ENCODE measurements at regions of chr15 and their contacts with region 1.

Region 1: GRCh38 chr15:98311566-98312188 is 336.7 kb upstream of the IGF1R start:
- DNase-seq: peak; percentile 58
- ATAC-seq: no peak
- H3K4me3 ChIP-seq: no peak overlapping the region
- H3K4me3 Mint-ChIP-seq: no peak overlapping the region
- H3K27ac ChIP-seq: no peak overlapping the region
- H3K27ac Mint-ChIP-seq: no peak overlapping the region
- H3K4me1 ChIP-seq: no peaks in the 10 kb centered on the region
- H3K4me1 Mint-ChIP-seq: no peaks in the 10 kb centered on the region
- H3K27me3 ChIP-seq: no peaks in the 10 kb centered on the region
- H3K27me3 Mint-ChIP-seq: peaks cover 3% of the 10 kb centered on the region
- CTCF ChIP-seq: peak; percentile 96

Region 2: DNA sequence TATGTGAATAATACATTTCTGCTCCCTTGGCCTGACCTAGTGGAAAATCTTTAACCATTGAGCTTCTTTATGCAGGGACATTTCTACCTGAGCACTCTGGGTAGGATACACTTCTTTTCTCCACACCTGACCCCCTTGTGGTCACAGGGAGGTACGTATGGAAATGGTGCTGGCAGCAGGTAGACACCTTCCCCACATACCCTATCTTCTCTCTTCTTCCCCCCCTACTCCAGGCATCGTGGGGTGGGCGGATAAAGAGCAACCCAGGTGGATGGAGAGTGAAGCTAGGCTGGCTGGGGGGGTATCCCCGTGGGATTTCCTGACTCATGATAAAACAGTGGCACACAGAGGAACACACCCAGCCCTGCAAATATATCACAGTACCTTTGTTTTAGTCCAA is 39.1 kb before region 1 on chr15:
- CTCF ChIA-PET with region 1: no interaction called
- POLR2A ChIA-PET with region 1: no interaction called
- intact Hi-C with region 1: no loop called
- DNase-seq: no peak
- ATAC-seq: no peak
- H3K4me3 ChIP-seq: no peak overlapping the region
- H3K4me3 Mint-ChIP-seq: no peak overlapping the region
- H3K27ac ChIP-seq: no peak overlapping the region
- H3K27ac Mint-ChIP-seq: no peak overlapping the region
- H3K4me1 ChIP-seq: no peaks in the 10 kb centered on the region
- H3K4me1 Mint-ChIP-seq: no peaks in the 10 kb centered on the region
- H3K27me3 ChIP-seq: peaks cover 0 to 5% (median 0%) of the 10 kb centered on the region in 4 experiments
- H3K27me3 Mint-ChIP-seq: no peaks in the 10 kb centered on the region
- CTCF ChIP-seq: no peak

Region 3: DNA sequence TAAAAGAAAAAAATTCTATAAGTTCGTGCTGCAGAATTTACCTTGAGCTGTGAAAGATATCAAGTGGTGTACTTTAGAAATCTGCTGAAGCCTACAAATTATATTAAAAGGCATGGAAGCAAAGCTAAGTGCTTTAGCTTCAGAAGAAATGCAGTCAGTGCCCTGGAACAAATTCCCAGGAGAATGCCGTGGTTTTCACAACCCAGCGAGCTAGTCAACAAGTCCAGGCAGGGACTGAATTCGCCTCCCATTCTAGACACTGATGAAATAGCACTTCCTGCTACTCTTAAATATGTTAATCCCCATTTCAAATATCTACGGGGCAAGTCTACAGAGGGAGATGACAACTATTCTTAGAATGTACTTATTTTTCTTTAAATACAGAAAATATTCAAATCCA is 10.2 kb after region 1 on chr15:
- CTCF ChIA-PET with region 1: interaction called, 22 read pairs
- POLR2A ChIA-PET with region 1: no interaction called
- intact Hi-C with region 1: no loop called
- DNase-seq: no peak
- ATAC-seq: no peak
- H3K4me3 ChIP-seq: no peak overlapping the region
- H3K4me3 Mint-ChIP-seq: no peak overlapping the region
- H3K27ac ChIP-seq: no peak overlapping the region
- H3K27ac Mint-ChIP-seq: no peak overlapping the region
- H3K4me1 ChIP-seq: no peaks in the 10 kb centered on the region
- H3K4me1 Mint-ChIP-seq: no peaks in the 10 kb centered on the region
- H3K27me3 ChIP-seq: no peaks in the 10 kb centered on the region
- H3K27me3 Mint-ChIP-seq: no peaks in the 10 kb centered on the region
- CTCF ChIP-seq: no peak

Region 4: DNA sequence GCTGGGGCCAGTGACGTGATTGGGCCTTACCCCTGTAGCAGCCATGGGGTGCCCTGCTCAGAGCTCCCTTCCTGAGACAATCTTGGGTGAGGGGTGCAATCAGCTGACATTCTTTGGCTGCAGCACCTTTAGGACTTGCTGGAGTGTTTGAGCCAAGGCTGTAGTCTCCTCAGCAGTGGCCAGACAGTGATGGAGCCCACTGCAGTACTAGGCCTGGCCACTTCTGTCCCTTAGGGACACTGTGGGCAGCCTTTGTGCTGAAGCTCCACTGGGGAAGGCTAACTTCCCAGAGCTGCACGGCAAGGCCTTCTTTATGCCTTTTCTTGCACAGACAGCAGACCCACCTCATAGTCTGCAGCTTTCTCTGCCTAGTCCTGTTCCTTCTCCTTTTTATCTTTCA is 51.7 kb after region 1 on chr15:
- CTCF ChIA-PET with region 1: no interaction called
- POLR2A ChIA-PET with region 1: no interaction called
- intact Hi-C with region 1: no loop called
- DNase-seq: no peak
- ATAC-seq: no peak
- H3K4me3 ChIP-seq: no peak overlapping the region
- H3K4me3 Mint-ChIP-seq: no peak overlapping the region
- H3K27ac ChIP-seq: no peak overlapping the region
- H3K27ac Mint-ChIP-seq: no peak overlapping the region
- H3K4me1 ChIP-seq: no peaks in the 10 kb centered on the region
- H3K4me1 Mint-ChIP-seq: no peaks in the 10 kb centered on the region
- H3K27me3 ChIP-seq: no peaks in the 10 kb centered on the region
- H3K27me3 Mint-ChIP-seq: no peaks in the 10 kb centered on the region
- CTCF ChIP-seq: no peak

Region 5: DNA sequence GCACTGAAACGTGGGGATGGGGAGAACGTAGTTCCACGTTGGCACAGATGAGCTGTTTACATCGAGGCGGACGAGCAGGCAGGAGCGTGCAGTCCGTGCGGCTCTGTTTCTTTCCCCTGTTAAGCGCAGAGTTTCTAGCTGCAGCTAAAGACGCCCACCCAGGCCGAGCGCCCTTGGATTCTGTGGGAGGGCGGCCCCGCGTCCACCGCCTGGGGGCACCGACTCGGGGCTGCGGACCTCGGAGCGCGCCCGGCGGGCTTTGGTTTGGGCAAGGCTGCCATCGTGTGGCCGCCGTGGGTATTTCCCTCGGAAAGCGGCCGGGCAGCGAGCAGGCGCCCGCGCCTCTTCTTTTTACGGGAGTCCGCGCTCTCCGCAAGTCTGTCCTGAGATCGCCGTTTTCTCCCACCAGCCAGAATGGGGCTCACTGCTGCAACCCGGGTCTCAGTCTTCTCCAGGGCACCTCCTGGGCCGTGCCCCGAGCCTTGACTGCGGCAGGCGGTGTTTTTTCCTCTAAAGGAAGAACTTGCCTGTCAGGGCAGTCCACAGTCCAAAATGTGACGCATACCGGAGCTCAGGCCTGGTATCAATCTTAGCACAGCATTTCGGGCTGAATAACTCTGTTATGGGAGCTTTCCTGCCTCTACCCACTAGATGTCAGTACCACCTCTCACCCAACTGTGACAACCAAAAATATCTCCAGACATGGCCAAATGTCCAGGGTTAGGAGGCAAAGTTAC is 116.7 kb after region 1 on chr15:
- CTCF ChIA-PET with region 1: interaction called, 23 read pairs
- POLR2A ChIA-PET with region 1: no interaction called
- intact Hi-C with region 1: loop called (anchors 1 kb)
- DNase-seq: peak; percentile 61
- ATAC-seq: peak; percentile 72
- H3K4me3 ChIP-seq: peak overlapping the region in 2 of 5 experiments; percentile 23 to 29
- H3K4me3 Mint-ChIP-seq: peak overlapping the region; percentile 47
- H3K27ac ChIP-seq: no peak overlapping the region
- H3K27ac Mint-ChIP-seq: no peak overlapping the region
- H3K4me1 ChIP-seq: peaks cover 8% of the 10 kb centered on the region in 2 donors
- H3K4me1 Mint-ChIP-seq: peaks cover 6% of the 10 kb centered on the region
- H3K27me3 ChIP-seq: peaks cover 0 to 35% (median 11%) of the 10 kb centered on the region in 4 experiments
- H3K27me3 Mint-ChIP-seq: peaks cover 40% of the 10 kb centered on the region
- CTCF ChIP-seq: peak; percentile 85

Region 6: GRCh38 chr15:98658831-98659699 is 347.4 kb after region 1 on chr15:
- CTCF ChIA-PET with region 1: interaction called, 4 read pairs
- POLR2A ChIA-PET with region 1: no interaction called
- intact Hi-C with region 1: loop called (anchors 5 kb)
- DNase-seq: peak; percentile 70
- ATAC-seq: peak; percentile 58
- H3K4me3 ChIP-seq: no peak overlapping the region
- H3K4me3 Mint-ChIP-seq: no peak overlapping the region
- H3K27ac ChIP-seq: no peak overlapping the region
- H3K27ac Mint-ChIP-seq: no peak overlapping the region
- H3K4me1 ChIP-seq: no peaks in the 10 kb centered on the region
- H3K4me1 Mint-ChIP-seq: no peaks in the 10 kb centered on the region
- H3K27me3 ChIP-seq: no peaks in the 10 kb centered on the region
- H3K27me3 Mint-ChIP-seq: peaks cover 31% of the 10 kb centered on the region
- CTCF ChIP-seq: peak; percentile 97